A549 (cell line): ENCODE measurements at regions of chr7 and their contacts with region 1.

Region 1: DNA sequence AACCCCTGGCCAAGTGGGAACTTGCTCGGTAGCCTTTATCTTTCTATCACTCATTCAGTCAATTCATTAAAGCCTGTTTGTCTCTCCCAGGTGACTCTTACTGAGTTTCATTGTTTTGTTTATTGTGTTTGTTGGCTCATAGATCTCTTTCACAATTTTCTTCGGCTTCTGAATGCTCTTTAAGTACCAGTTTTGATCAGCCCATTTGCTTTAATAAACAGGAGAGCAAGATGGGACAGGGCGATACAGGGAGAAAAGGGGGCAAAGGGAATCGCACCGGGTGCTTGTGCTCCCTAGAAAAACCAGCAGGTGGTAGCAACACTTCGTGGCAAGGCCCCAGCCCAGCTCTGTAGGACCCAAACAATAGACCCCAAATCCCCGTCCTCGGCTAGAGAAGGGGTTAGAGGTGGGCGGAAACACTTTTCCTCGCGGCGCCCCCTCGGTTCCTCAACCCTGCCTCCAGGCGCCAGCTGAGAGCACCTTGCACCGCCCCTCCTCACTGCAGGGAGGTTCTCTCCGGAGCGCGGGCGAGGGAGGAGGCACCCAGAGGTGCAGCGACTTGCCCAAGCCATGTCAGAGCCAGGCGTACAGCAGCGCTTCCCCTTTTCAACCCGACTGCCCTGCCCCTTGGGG is 1.0 kb upstream of the EPHB6 start:
- DNase-seq: peak; percentile 63 to 79
- ATAC-seq: peak; percentile 89 to 92
- H3K4me3 ChIP-seq: peak overlapping the region; percentile 61
- H3K27ac ChIP-seq: peak overlapping the region; percentile 58 to 84; a peak in 4 of 6 replicates
- H3K4me1 ChIP-seq: no peaks in the 10 kb centered on the region
- CTCF ChIP-seq: peak; percentile 81
- EP300 ChIP-seq: no peak
- POLR2A ChIP-seq: no peak
- RAD21 ChIP-seq: peak; percentile 76 to 86

Region 2: DNA sequence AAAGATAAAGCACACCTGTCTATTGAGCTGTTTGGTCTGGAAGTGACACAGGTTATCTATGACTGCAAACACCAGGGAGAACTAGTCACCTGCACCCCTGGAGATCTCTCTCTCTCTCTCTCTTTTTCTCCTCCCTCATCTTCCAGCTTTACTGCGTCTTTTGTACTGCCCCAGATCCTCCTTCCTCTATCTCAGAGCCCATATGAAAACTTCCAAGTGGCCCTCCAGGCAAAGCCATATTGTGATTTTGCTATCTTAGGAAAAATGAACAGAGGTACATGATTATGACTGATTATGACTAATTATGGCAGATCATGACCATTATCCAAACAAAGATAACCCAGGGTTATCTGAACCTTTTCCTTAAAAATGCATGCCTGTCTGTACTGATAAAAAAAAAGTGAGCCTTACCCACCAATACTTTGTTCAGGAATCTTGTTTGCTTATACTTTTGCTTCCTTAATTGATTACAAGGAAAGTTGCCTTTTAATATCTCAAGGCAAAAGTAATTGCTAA is 11.5 kb before region 1 on chr7:
- CTCF ChIA-PET with region 1: interaction called, 15 read pairs
- POLR2A ChIA-PET with region 1: no interaction called
- DNase-seq: no peak
- ATAC-seq: no peak
- H3K4me3 ChIP-seq: no peak overlapping the region
- H3K27ac ChIP-seq: no peak overlapping the region
- H3K4me1 ChIP-seq: no peaks in the 10 kb centered on the region
- CTCF ChIP-seq: no peak
- EP300 ChIP-seq: no peak
- POLR2A ChIP-seq: no peak
- RAD21 ChIP-seq: no peak

Region 3: DNA sequence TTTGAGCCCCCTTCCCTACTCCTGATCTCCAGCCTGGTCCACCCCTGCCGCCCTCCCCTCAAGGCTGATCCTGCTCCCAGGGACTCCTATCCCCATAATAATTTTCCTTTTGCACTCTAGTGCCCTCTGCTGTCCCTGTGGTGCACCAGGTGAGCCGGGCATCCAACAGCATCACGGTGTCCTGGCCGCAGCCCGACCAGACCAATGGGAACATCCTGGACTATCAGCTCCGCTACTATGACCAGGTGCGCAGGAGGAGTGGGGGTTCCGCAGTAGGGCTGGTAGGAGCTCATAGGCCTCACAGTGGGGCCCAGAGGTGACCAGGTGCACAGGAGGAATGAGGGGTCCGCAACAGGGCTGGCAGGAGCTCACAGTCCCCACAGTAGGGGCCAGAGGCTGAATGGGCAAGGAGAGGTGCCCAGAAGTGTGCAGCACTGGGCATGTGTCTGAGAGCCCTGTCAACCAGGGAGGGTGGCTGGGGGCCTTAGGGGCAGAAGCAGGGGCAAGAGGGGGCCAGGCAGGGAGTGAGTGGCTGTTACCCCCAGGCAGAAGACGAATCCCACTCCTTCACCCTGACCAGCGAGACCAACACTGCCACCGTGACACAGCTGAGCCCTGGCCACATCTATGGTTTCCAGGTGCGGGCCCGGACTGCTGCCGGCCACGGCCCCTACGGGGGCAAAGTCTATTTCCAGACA is 12.7 kb after region 1 on chr7:
- CTCF ChIA-PET with region 1: interaction called, 40 read pairs
- POLR2A ChIA-PET with region 1: no interaction called
- DNase-seq: peak; percentile 32 to 67
- ATAC-seq: peak; percentile 82 to 93
- H3K4me3 ChIP-seq: no peak overlapping the region
- H3K27ac ChIP-seq: no peak overlapping the region
- H3K4me1 ChIP-seq: no peaks in the 10 kb centered on the region
- CTCF ChIP-seq: peak; percentile 49
- EP300 ChIP-seq: no peak
- POLR2A ChIP-seq: no peak
- RAD21 ChIP-seq: peak; percentile 27 to 47; a peak in 3 of 5 replicates

Region 4: GRCh38 chr7:142873281-142873787 is 19.5 kb after region 1 on chr7:
- CTCF ChIA-PET with region 1: interaction called, 18 read pairs
- POLR2A ChIA-PET with region 1: no interaction called
- DNase-seq: peak; percentile 33 to 38
- ATAC-seq: peak in 1 of 2 experiments; percentile 83; a peak in 3 of 6 replicates
- H3K4me3 ChIP-seq: no peak overlapping the region
- H3K27ac ChIP-seq: no peak overlapping the region
- H3K4me1 ChIP-seq: no peaks in the 10 kb centered on the region
- CTCF ChIP-seq: no peak
- EP300 ChIP-seq: no peak
- POLR2A ChIP-seq: no peak
- RAD21 ChIP-seq: no peak; a peak in 1 of 5 replicates

Region 5: GRCh38 chr7:143008007-143008901 is 154.4 kb after region 1 on chr7:
- CTCF ChIA-PET with region 1: interaction called, 20 read pairs
- POLR2A ChIA-PET with region 1: no interaction called
- DNase-seq: peak; percentile 63 to 66
- ATAC-seq: peak; percentile 94 to 97
- H3K4me3 ChIP-seq: no peak overlapping the region
- H3K27ac ChIP-seq: no peak overlapping the region
- H3K4me1 ChIP-seq: no peaks in the 10 kb centered on the region
- CTCF ChIP-seq: peak; percentile 93
- EP300 ChIP-seq: no peak
- POLR2A ChIP-seq: no peak
- RAD21 ChIP-seq: peak; percentile 93 to 94